Dendritic cell treated with granulocyte-macrophage colony-stimulating factor and Interleukin-4, amounts not matched to agents 40 ng/mL and 50 ng/mL, for 4 days (primary cell): ENCODE measurements at regions of chr10 and their contacts with region 1.

Region 1: GRCh38 chr10:91298224-91298871 is 77.9 kb downstream of the PCGF5 start:
- H3K4me3 Mint-ChIP-seq: no peak overlapping the region
- H3K27ac Mint-ChIP-seq: no peak overlapping the region
- H3K4me1 Mint-ChIP-seq: peaks cover 9% of the 10 kb centered on the region
- H3K27me3 Mint-ChIP-seq: peaks cover 14% of the 10 kb centered on the region

Region 2: DNA sequence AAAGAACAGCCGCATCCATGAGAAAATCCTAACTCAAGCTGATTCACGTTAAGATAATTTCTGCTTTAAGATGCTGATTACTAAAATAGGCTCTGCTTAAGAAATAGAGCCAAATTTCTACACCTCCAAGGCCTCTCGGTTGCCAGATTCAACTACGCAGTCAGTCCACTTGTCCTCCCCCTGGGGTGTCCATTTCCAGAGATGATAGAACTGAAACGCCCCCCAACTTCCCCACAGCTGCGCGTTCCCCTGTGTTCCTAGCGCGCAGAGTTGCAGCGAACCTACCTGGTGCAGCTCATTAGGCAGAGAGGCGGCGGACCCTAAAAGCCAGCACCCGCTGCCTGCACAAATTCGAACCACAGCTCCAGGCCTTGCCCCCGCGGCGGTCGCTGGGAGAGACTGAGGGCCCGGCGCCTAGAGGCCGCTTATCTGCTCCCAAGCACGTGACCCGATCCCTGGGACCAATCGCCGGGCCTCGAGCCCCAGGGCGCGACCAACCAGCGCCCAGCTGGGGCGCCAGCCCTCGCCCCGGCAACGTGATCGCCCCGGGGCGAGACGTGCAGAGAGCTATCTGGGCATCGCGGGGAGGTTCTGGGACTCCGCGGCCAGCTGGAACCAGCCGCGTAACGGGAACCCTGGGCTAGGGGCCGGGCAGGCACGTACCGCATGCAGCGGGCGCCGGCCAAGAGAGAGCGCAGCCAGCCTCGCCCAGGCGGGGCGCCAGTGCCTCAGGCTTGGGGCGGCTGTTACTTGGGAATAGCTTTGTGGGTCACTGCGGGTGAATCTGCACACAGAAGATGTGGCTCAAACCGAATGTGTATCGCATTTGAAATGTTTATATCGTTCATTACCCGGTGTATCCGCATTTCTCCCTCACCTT is 334.6 kb after region 1 on chr10 and contains the start of gene PPP1R3C:
- intact Hi-C with region 1: loop called (anchors 1 kb)
- H3K4me3 Mint-ChIP-seq: peak within 1 kb of the TSS; percentile 67
- H3K27ac Mint-ChIP-seq: no peak within 1 kb of the TSS
- H3K4me1 Mint-ChIP-seq: peaks cover 8% of the 10 kb centered on the region
- H3K27me3 Mint-ChIP-seq: peaks cover 39% of the 10 kb centered on the region

Region 3: DNA sequence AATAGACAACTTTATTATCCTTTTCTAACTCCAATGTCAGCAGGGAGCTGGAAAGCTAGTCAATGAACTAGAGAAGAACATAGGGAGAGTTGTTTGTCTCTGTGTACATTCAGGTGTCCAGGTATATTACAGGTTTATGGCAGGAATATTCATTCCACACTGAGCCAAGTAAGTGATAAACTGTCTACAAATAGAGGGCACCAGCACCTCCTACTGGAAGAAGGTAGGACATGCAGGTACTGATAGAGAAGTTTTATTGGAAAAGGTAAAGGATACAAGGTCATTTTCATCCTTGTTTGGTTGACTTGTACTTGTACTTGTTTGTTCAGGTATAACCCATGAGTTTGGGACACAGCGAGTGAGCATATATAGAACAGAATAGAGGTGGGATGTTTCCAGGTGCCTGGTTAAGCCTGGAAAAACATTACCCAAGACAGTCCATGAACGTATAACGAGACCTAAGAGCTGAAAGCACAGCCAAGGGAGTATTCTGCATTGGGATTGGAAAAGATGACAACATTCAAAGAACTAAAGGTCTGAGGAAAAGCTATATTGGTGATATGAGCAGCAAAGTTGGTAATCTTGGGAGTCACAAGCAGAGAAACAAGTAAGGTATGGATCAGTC is 395.9 kb after region 1 on chr10:
- intact Hi-C with region 1: loop called (anchors 5 kb)
- H3K4me3 Mint-ChIP-seq: no peak overlapping the region
- H3K27ac Mint-ChIP-seq: no peak overlapping the region
- H3K4me1 Mint-ChIP-seq: no peaks in the 10 kb centered on the region
- H3K27me3 Mint-ChIP-seq: no peaks in the 10 kb centered on the region